AG04449 (cell line): ENCODE measurements at regions of chr6 and their contacts with region 1.

Region 1: GRCh38 chr6:54717849-54718455 is 128.6 kb upstream of the FAM83B start:
- DNase-seq: no peak
- H3K4me3 ChIP-seq: no peak overlapping the region
- CTCF ChIP-seq: peak; percentile 79

Region 2: DNA sequence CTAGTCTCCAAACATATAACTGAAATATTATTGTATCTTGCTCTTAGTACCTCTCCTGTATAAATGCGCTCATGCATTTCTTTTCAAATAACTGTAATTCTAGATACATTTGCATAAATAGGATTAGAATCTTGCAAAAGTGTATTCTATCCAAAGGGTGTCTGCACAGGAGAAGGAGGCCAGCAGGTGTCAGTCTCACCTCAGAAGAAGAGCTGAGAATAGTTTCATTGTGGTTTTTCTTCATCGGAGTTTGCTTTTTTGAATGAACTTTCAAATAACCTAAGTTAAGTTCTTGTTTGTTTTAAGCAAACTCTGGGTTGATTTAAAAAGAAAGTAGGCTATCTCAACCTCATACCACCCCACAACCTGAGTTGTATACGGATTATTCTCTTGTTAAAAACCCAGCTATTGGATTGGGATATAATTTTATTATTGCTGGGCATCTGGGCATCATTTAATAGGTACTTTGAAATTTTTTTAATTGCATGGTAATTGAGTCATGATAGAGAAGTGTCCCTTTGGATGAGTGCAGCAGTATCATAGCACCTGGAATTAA is 731.7 kb before region 1 on chr6:
- CTCF ChIA-PET with region 1: interaction called, 31 read pairs
- POLR2A ChIA-PET with region 1: no interaction called
- DNase-seq: no peak
- H3K4me3 ChIP-seq: no peak overlapping the region
- CTCF ChIP-seq: peak; percentile 68

Region 3: DNA sequence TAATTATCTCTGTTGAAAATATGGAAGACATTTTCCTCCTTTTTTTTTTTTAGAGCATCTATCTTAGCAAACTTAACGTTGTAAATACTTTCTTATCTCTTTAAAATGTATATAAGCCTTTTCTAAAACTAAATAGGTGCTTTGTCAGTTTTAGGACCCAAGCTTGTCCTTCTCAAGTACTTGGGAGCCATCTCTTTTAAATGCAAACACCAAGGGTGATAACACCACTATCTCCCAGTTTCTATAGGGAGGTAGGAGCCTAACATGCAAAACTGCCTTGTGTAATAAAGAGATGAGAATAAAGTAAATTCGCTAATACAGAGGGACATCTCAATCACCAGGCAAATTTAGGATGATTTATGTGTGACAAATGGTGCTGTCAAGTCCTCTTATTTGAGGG is 28.3 kb before region 1 on chr6:
- CTCF ChIA-PET with region 1: interaction called, 25 read pairs
- POLR2A ChIA-PET with region 1: no interaction called
- DNase-seq: no peak
- H3K4me3 ChIP-seq: no peak overlapping the region
- CTCF ChIP-seq: no peak

Region 4: GRCh38 chr6:54730767-54731630 is 13.0 kb after region 1 on chr6:
- CTCF ChIA-PET with region 1: interaction called, 27 read pairs
- POLR2A ChIA-PET with region 1: no interaction called
- DNase-seq: no peak
- H3K4me3 ChIP-seq: no peak overlapping the region
- CTCF ChIP-seq: no peak

Region 5: GRCh38 chr6:54747955-54748354 is 30.0 kb after region 1 on chr6:
- CTCF ChIA-PET with region 1: interaction called, 14 read pairs
- POLR2A ChIA-PET with region 1: no interaction called
- DNase-seq: no peak
- H3K4me3 ChIP-seq: no peak overlapping the region
- CTCF ChIP-seq: no peak